AG04450 (cell line): ENCODE measurements at regions of chr15 and their contacts with region 1.

Region 1: DNA sequence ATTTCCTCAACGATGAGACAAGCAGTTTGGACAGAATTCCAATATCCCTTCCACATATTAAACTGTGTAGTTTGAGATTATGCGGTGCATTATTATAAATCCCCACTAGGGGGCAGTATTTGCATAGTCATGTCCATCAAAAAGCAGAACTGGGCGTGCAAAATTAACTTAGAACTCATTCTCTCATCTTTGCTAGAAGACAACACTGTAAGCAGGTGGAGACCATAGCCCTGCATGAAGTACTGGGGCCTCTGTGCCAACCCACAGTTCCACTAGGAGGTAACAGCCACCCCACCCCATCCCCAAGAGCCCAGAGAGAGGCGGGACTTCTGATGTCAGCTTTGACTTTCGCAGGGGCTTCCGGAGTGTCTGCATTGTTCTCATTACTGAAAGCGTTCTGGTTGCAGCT is 106.6 kb upstream of the TMC3 start:
- DNase-seq: peak; percentile 29
- H3K4me3 ChIP-seq: no peak overlapping the region
- H3K27ac ChIP-seq: no peak overlapping the region
- H3K27me3 ChIP-seq: no peaks in the 10 kb centered on the region
- CTCF ChIP-seq: peak; percentile 70

Region 2: GRCh38 chr15:81268881-81269601 is 211.6 kb before region 1 on chr15:
- CTCF ChIA-PET with region 1: no interaction called
- POLR2A ChIA-PET with region 1: no interaction called
- DNase-seq: no peak
- H3K4me3 ChIP-seq: no peak overlapping the region
- H3K27ac ChIP-seq: no peak overlapping the region
- H3K27me3 ChIP-seq: no peaks in the 10 kb centered on the region
- CTCF ChIP-seq: no peak

Region 3: GRCh38 chr15:81469154-81469553 is 11.5 kb before region 1 on chr15:
- CTCF ChIA-PET with region 1: interaction called, 27 read pairs
- POLR2A ChIA-PET with region 1: no interaction called
- DNase-seq: no peak
- H3K4me3 ChIP-seq: no peak overlapping the region
- H3K27ac ChIP-seq: no peak overlapping the region
- H3K27me3 ChIP-seq: peaks cover 2% of the 10 kb centered on the region
- CTCF ChIP-seq: no peak

Region 4: GRCh38 chr15:81939604-81940440 is 459.2 kb after region 1 on chr15:
- CTCF ChIA-PET with region 1: interaction called, 17 read pairs
- POLR2A ChIA-PET with region 1: no interaction called
- DNase-seq: peak; percentile 24
- H3K4me3 ChIP-seq: no peak overlapping the region
- H3K27ac ChIP-seq: peak overlapping the region; percentile 62
- H3K27me3 ChIP-seq: no peaks in the 10 kb centered on the region
- CTCF ChIP-seq: peak; percentile 66